Activated CD4-positive, alpha-beta memory T cell treated with anti-CD3 and anti-CD28 coated beads for 36 hours (primary cell): ENCODE measurements at regions of chr6 and their contacts with region 1.

Region 1: GRCh38 chr6:160469153-160469552 is 121.0 kb downstream of the SLC22A3 start:
- DNase-seq: no peak
- H3K4me3 Mint-ChIP-seq: no peak overlapping the region
- H3K27ac Mint-ChIP-seq: no peak overlapping the region
- H3K4me1 Mint-ChIP-seq: peaks cover 21% of the 10 kb centered on the region
- H3K27me3 Mint-ChIP-seq: peaks cover 4% of the 10 kb centered on the region

Region 2: GRCh38 chr6:160408528-160408927 is 60.6 kb before region 1 on chr6:
- CTCF ChIA-PET with region 1: no interaction called
- POLR2A ChIA-PET with region 1: no interaction called
- intact Hi-C with region 1: no loop called
- DNase-seq: no peak
- H3K4me3 Mint-ChIP-seq: no peak overlapping the region
- H3K27ac Mint-ChIP-seq: no peak overlapping the region
- H3K4me1 Mint-ChIP-seq: no peaks in the 10 kb centered on the region
- H3K27me3 Mint-ChIP-seq: peaks cover 2% of the 10 kb centered on the region

Region 3: DNA sequence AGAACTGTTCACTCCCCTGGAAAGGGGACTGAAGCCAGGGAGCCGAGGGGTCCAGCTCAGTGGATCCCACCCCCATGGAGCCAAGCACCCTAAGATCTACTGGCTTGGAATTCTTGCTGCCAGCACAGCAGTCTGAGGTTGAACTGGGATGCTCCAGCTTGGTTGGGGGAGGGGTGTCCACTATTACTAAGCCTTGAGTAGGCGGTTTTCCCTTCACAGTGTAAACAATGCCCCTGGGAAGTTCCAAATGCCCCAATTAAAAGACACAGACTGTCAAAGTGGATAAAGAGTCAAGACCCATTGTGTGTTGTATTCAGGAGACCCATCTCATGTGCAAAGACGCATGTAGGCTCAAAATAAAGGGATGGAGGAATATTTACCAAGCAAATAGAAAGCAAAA is 44.7 kb after region 1 on chr6:
- CTCF ChIA-PET with region 1: interaction called, 13 read pairs
- POLR2A ChIA-PET with region 1: interaction called, 4 read pairs
- intact Hi-C with region 1: loop called (anchors 2 kb)
- DNase-seq: no peak
- H3K4me3 Mint-ChIP-seq: no peak overlapping the region
- H3K27ac Mint-ChIP-seq: no peak overlapping the region
- H3K4me1 Mint-ChIP-seq: peaks cover 10% of the 10 kb centered on the region
- H3K27me3 Mint-ChIP-seq: no peaks in the 10 kb centered on the region